ENCODE measurements at regions of chr3 and their contacts with region 1.

Region 1: GRCh38 chr3:185645596-185646381 is 59.7 kb downstream of the SENP2 start:
- DNase-seq: no peak
- H3K4me3 ChIP-seq: no peak overlapping the region
- H3K27ac ChIP-seq: no peak overlapping the region
- H3K4me1 ChIP-seq: no peaks in the 10 kb centered on the region
- H3K27me3 ChIP-seq: no peaks in the 10 kb centered on the region
- CTCF ChIP-seq: no peak

Region 2: GRCh38 chr3:186110975-186111974 is 465.5 kb after region 1 on chr3:
- CTCF ChIA-PET with region 1: no interaction called
- POLR2A ChIA-PET with region 1: no interaction called
- intact Hi-C with region 1: no loop called
- DNase-seq: no peak
- H3K4me3 ChIP-seq: no peak overlapping the region
- H3K27ac ChIP-seq: no peak overlapping the region
- H3K4me1 ChIP-seq: peaks cover 19% of the 10 kb centered on the region
- H3K27me3 ChIP-seq: no peaks in the 10 kb centered on the region
- CTCF ChIP-seq: no peak

Region 3: GRCh38 chr3:186352369-186352768 is 706.6 kb after region 1 on chr3:
- CTCF ChIA-PET with region 1: no interaction called
- POLR2A ChIA-PET with region 1: interaction called, 24 read pairs
- intact Hi-C with region 1: no loop called
- DNase-seq: no peak
- H3K4me3 ChIP-seq: no peak overlapping the region
- H3K27ac ChIP-seq: no peak overlapping the region
- H3K4me1 ChIP-seq: no peaks in the 10 kb centered on the region
- H3K27me3 ChIP-seq: peaks cover 45% of the 10 kb centered on the region
- CTCF ChIP-seq: no peak